ENCODE measurements at regions of chr7 and their contacts with region 1.

Region 1: GRCh38 chr7:3065724-3066143 is 22.1 kb upstream of the CARD11 start:
- DNase-seq: peak; percentile 89
- H3K4me3 Mint-ChIP-seq: peak overlapping the region; percentile 64
- H3K27ac Mint-ChIP-seq: peak overlapping the region; percentile 83
- H3K4me1 Mint-ChIP-seq: peaks cover 86% of the 10 kb centered on the region
- H3K27me3 Mint-ChIP-seq: no peaks in the 10 kb centered on the region

Region 2: GRCh38 chr7:2894118-2894940 is 171.4 kb before region 1 on chr7:
- CTCF ChIA-PET with region 1: interaction called, 10 read pairs
- POLR2A ChIA-PET with region 1: no interaction called
- intact Hi-C with region 1: loop called (anchors 5 kb)
- DNase-seq: peak; percentile 84
- H3K4me3 Mint-ChIP-seq: peak overlapping the region; percentile 73
- H3K27ac Mint-ChIP-seq: peak overlapping the region; percentile 94
- H3K4me1 Mint-ChIP-seq: peaks cover 23% of the 10 kb centered on the region
- H3K27me3 Mint-ChIP-seq: no peaks in the 10 kb centered on the region

Region 3: GRCh38 chr7:3028071-3028757 is 37.5 kb before region 1 on chr7:
- CTCF ChIA-PET with region 1: no interaction called
- POLR2A ChIA-PET with region 1: interaction called, 3 read pairs
- intact Hi-C with region 1: loop called (anchors 1 kb)
- DNase-seq: peak; percentile 89
- H3K4me3 Mint-ChIP-seq: peak overlapping the region; percentile 61
- H3K27ac Mint-ChIP-seq: peak overlapping the region; percentile 96
- H3K4me1 Mint-ChIP-seq: peaks cover 51% of the 10 kb centered on the region
- H3K27me3 Mint-ChIP-seq: no peaks in the 10 kb centered on the region

Region 4: GRCh38 chr7:3092468-3092867 is 26.7 kb after region 1 on chr7:
- CTCF ChIA-PET with region 1: interaction called, 52 read pairs
- POLR2A ChIA-PET with region 1: interaction called, 7 read pairs
- intact Hi-C with region 1: loop called (anchors 1 kb)
- DNase-seq: peak; percentile 91
- H3K4me3 Mint-ChIP-seq: peak overlapping the region; percentile 27
- H3K27ac Mint-ChIP-seq: peak overlapping the region; percentile 89
- H3K4me1 Mint-ChIP-seq: peaks cover 70% of the 10 kb centered on the region
- H3K27me3 Mint-ChIP-seq: no peaks in the 10 kb centered on the region

Region 5: DNA sequence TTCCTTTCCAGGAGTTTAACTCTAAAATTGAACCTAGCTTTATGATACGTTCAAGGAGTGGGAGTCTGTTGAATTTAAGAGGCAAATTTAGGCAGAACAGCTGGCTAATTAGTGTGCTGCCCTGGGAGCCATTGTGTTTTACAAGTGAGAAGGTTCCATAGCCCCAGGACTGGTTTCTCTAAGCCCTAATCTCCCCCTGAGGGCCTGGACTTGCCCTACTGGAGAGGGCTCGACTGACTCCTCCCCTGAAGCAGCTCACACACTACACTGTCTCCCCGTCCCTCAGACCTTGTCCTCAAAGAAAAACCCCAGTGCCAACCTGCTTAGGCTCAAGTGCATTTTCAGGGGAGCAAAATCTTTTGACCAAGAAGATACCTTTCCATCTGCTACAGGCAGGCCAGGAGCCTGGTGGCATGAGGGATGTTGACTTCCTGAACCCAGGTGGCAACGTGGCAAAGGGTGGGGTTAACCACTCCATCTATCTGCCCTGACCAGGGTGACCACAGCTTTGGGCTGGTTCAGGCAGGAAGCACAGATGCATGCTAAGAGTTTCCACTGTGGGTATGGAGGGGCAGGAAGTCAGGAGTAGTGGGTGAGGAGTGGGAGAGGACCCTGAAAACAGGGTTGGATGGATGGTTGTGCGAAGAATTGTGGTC is 46.9 kb after region 1 on chr7:
- CTCF ChIA-PET with region 1: interaction called, 33 read pairs
- POLR2A ChIA-PET with region 1: no interaction called
- intact Hi-C with region 1: no loop called
- DNase-seq: peak; percentile 76
- H3K4me3 Mint-ChIP-seq: peak overlapping the region; percentile 13
- H3K27ac Mint-ChIP-seq: peak overlapping the region; percentile 71
- H3K4me1 Mint-ChIP-seq: peaks cover 71% of the 10 kb centered on the region
- H3K27me3 Mint-ChIP-seq: no peaks in the 10 kb centered on the region

Region 6: GRCh38 chr7:3154912-3155494 is 89.3 kb after region 1 on chr7:
- CTCF ChIA-PET with region 1: interaction called, 73 read pairs
- POLR2A ChIA-PET with region 1: no interaction called
- intact Hi-C with region 1: loop called (anchors 1 kb)
- DNase-seq: peak; percentile 70
- H3K4me3 Mint-ChIP-seq: no peak overlapping the region
- H3K27ac Mint-ChIP-seq: peak overlapping the region; percentile 19
- H3K4me1 Mint-ChIP-seq: peaks cover 19% of the 10 kb centered on the region
- H3K27me3 Mint-ChIP-seq: peaks cover 2% of the 10 kb centered on the region

Region 7: DNA sequence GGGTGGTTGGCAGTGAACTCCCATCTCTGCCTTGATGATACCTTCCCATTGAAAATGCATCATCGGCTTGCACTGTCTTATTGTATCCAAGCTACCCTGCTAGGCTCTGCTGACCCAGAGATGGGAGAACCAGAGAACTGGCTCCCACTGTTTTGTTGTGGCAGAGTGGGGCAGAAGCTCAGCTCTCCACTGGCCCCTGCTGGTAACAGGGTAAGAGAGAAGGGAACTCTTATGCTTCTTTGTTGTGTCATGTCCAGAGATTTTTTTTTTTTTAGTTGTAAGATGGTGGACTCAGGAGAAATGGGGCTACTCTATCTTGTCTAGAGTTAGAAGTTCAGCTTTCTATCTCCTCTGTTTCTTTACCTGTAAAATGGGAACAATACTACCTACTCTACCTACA is 134.8 kb after region 1 on chr7:
- CTCF ChIA-PET with region 1: no interaction called
- POLR2A ChIA-PET with region 1: no interaction called
- intact Hi-C with region 1: no loop called
- DNase-seq: peak; percentile 39
- H3K4me3 Mint-ChIP-seq: no peak overlapping the region
- H3K27ac Mint-ChIP-seq: no peak overlapping the region
- H3K4me1 Mint-ChIP-seq: no peaks in the 10 kb centered on the region
- H3K27me3 Mint-ChIP-seq: peaks cover 5% of the 10 kb centered on the region

Measured in activated CD4-positive, alpha-beta memory T cell treated with anti-CD3 and anti-CD28 coated beads for 36 hours (primary cell).